MCF 10A (cell line): ENCODE measurements at regions of chr12 and their contacts with region 1.

Region 1: DNA sequence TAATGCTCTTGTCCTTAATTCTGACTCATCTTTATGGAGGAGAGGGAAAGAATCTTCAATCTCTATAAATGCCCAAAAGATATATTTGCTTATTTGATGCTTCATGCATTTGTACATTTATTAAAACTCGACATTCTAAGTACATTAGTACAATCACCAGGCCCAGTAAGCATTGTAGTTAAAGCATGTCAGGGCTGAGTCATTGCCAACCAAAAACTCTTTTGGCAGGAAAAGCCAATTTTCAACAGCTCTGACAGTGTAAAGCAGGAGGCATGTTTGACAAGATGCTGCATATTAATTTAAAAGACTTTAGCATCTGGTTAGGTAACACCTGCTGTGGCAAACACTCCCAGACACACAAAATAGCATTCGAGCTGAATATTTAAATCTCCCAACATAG is 290.9 kb downstream of the PPFIA2 start:
- DNase-seq: peak; percentile 45
- H3K4me3 Mint-ChIP-seq: no peak overlapping the region
- H3K27ac Mint-ChIP-seq: no peak overlapping the region
- H3K4me1 Mint-ChIP-seq: no peaks in the 10 kb centered on the region
- H3K27me3 Mint-ChIP-seq: peaks cover 13% of the 10 kb centered on the region
- CTCF ChIP-seq: no peak

Region 2: GRCh38 chr12:81403348-81403747 is 64.9 kb before region 1 on chr12:
- CTCF ChIA-PET with region 1: no interaction called
- POLR2A ChIA-PET with region 1: no interaction called
- intact Hi-C with region 1: no loop called
- DNase-seq: no peak
- H3K4me3 Mint-ChIP-seq: no peak overlapping the region
- H3K27ac Mint-ChIP-seq: no peak overlapping the region
- H3K4me1 Mint-ChIP-seq: no peaks in the 10 kb centered on the region
- H3K27me3 Mint-ChIP-seq: peaks cover 11% of the 10 kb centered on the region
- CTCF ChIP-seq: no peak

Region 3: DNA sequence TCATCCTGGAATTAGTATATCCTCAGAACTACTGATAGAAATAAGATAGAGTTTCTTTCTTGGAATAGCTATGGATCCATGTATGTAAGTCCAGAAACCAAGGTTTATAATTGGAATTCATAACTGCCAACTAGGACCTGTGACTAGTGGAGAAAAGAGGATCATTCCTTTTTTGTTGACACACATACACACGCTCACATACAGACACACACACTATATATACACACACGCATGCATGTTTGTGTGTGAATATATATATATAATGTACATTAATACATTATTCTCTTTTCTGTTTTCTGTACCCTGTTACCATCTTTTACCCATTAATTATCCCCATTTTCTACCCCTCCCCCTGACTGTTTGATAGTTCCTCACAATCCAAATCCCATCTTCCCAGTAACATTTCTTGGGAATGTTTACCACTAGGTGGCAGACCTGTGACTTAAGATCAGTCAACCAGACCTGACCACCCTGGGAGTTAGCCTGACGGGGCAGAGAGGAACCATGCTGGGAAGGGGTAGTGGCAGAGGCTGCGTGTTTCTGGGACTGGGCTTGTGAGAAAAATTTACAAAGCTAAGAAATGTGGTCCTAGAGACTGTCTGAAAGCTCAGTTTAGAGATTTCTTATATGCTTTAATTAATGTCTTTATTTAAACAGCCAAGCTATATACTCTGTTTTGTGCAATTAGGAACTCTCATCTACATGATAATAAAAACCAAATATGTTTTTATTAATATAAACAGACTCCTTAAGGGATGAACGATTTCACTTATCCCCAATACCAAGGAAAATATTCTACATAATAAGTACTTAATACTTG is 17.1 kb before region 1 on chr12:
- CTCF ChIA-PET with region 1: interaction called, 17 read pairs
- POLR2A ChIA-PET with region 1: interaction called, 3 read pairs
- intact Hi-C with region 1: no loop called
- DNase-seq: peak; percentile 76
- H3K4me3 Mint-ChIP-seq: no peak overlapping the region
- H3K27ac Mint-ChIP-seq: no peak overlapping the region
- H3K4me1 Mint-ChIP-seq: no peaks in the 10 kb centered on the region
- H3K27me3 Mint-ChIP-seq: peaks cover 30% of the 10 kb centered on the region
- CTCF ChIP-seq: peak; percentile 41

Region 4: DNA sequence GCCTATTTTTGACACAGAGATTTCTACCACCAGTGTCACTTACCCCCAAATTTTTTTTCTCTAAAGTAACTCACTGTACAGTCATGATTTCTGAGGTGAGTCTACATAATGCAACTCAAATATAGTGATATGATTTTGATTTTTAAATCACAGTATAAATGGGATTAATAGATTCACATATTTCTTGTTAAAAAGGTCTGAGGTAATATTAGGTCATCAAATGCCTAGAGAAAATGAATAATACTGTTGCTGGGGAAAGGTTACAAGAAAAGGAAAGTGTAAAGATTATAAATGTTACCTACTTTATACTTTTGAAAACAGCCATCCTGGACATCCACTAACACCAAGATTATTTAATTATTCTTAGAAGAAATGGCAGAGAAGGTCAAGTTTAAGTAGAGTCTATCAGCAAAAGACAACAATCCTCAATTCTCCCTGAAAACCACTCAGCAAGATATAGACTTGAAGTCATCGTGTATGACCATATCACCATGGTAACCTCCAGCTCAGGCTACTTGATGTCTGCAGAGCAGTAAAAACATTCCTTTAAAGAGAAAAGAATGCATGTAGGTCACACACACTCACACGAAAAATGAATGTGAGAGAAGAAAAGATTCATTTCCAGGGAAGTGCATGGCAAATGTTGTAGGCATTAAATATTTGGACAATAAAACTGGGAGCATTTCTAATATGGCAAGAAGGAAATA is 831.3 kb after region 1 on chr12:
- CTCF ChIA-PET with region 1: no interaction called
- POLR2A ChIA-PET with region 1: no interaction called
- intact Hi-C with region 1: no loop called
- DNase-seq: no peak
- H3K4me3 Mint-ChIP-seq: no peak overlapping the region
- H3K27ac Mint-ChIP-seq: no peak overlapping the region
- H3K4me1 Mint-ChIP-seq: peaks cover 4% of the 10 kb centered on the region
- H3K27me3 Mint-ChIP-seq: no peaks in the 10 kb centered on the region
- CTCF ChIP-seq: no peak